ENCODE measurements at regions of chr18 and their contacts with region 1.

Region 1: DNA sequence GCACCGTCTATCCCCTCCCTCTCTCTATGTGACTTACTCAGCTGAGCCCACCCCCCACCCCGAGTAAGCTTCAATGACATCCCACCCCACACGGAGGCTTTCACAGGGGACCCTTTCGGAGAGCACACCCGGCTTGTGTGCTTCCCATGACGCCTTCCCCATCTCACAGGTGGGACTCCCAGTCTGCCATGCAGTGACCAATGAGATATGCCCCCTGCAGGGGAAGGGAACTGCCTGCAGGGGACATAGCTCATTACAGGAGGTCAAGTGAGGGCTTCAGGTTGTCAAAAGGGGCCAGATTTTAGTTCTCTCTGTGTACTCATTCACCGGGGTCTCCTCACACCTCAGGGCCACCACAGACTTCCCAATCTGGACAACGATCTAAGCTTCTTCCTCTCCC is 112.6 kb downstream of the GAREM1 start:
- DNase-seq: peak; percentile 23
- ATAC-seq: peak; percentile 74; the same call in 1 of the 2 replicates
- H3K4me3 Mint-ChIP-seq: no peak overlapping the region
- H3K27ac Mint-ChIP-seq: no peak overlapping the region
- H3K4me1 Mint-ChIP-seq: peaks cover 15% of the 10 kb centered on the region
- H3K27me3 Mint-ChIP-seq: no peaks in the 10 kb centered on the region
- CTCF ChIP-seq: no peak

Region 2: GRCh38 chr18:32289483-32290075 is 68.5 kb before region 1 on chr18:
- CTCF ChIA-PET with region 1: interaction called, 10 read pairs
- POLR2A ChIA-PET with region 1: no interaction called
- DNase-seq: peak; percentile 59
- ATAC-seq: peak; percentile 89
- H3K4me3 Mint-ChIP-seq: no peak overlapping the region
- H3K27ac Mint-ChIP-seq: no peak overlapping the region
- H3K4me1 Mint-ChIP-seq: peaks cover 8% of the 10 kb centered on the region
- H3K27me3 Mint-ChIP-seq: no peaks in the 10 kb centered on the region
- CTCF ChIP-seq: peak; percentile 49; the same call in 1 of the 2 replicates

Measured in WTC11 (cell line).